Ovary (tissue), 10 donors: ENCODE measurements at regions of chr3 and their contacts with region 1.

Region 1: GRCh38 chr3:40337136-40338108 is 27.9 kb downstream of the EIF1B start:
- DNase-seq: no peak
- H3K4me3 ChIP-seq: no peak overlapping the region
- H3K27ac ChIP-seq: no peak overlapping the region
- H3K4me1 ChIP-seq: no peaks in the 10 kb centered on the region
- H3K27me3 ChIP-seq: no peaks in the 10 kb centered on the region
- CTCF ChIP-seq: no peak
- EP300 ChIP-seq: no peak
- POLR2A ChIP-seq: no peak

Region 2: GRCh38 chr3:41863024-41863423 is 1525.6 kb after region 1 on chr3:
- intact Hi-C with region 1: loop called in 1 of 4 experiments (anchors 10 kb)
- DNase-seq: no peak
- H3K4me3 ChIP-seq: no peak overlapping the region
- H3K27ac ChIP-seq: no peak overlapping the region
- H3K4me1 ChIP-seq: no peaks in the 10 kb centered on the region
- H3K27me3 ChIP-seq: no peaks in the 10 kb centered on the region
- CTCF ChIP-seq: no peak
- EP300 ChIP-seq: no peak
- POLR2A ChIP-seq: no peak

Region 3: GRCh38 chr3:41881233-41881821 is 1543.9 kb after region 1 on chr3:
- intact Hi-C with region 1: loop called in 1 of 4 experiments (anchors 10 kb)
- DNase-seq: no peak
- H3K4me3 ChIP-seq: no peak overlapping the region
- H3K27ac ChIP-seq: no peak overlapping the region
- H3K4me1 ChIP-seq: no peaks in the 10 kb centered on the region
- H3K27me3 ChIP-seq: no peaks in the 10 kb centered on the region
- CTCF ChIP-seq: peak; percentile 47 to 73 (median 69)
- EP300 ChIP-seq: no peak
- POLR2A ChIP-seq: no peak